ENCODE measurements at regions of chr9 and their contacts with region 1.

Region 1: GRCh38 chr9:68584189-68585033 is 43.7 kb upstream of the TMEM252 start:
- DNase-seq: peak; percentile 64 to 89 (median 80)
- ATAC-seq: peak; percentile 100
- H3K4me3 ChIP-seq: no peak overlapping the region
- H3K4me3 Mint-ChIP-seq: no peak overlapping the region
- H3K27ac ChIP-seq: no peak overlapping the region
- H3K27ac Mint-ChIP-seq: peak overlapping the region in 1 of 9 donors; percentile 63
- H3K4me1 ChIP-seq: no peaks in the 10 kb centered on the region
- H3K4me1 Mint-ChIP-seq: peaks cover 0 to 5% (median 0%) of the 10 kb centered on the region in 7 donors
- H3K27me3 ChIP-seq: no peaks in the 10 kb centered on the region
- H3K27me3 Mint-ChIP-seq: peaks cover 0 to 14% (median 10%) of the 10 kb centered on the region in 5 donors

Region 2: GRCh38 chr9:68704814-68705530 is 120.6 kb after region 1 on chr9 and contains the start of gene PIP5K1B:
- CTCF ChIA-PET with region 1: no interaction called
- POLR2A ChIA-PET with region 1: no interaction called
- intact Hi-C with region 1: loop called in 1 of 2 experiments (anchors 10 kb)
- DNase-seq: peak in 6 of 9 donors; percentile 2 to 77 (median 13)
- ATAC-seq: peak; percentile 87
- H3K4me3 ChIP-seq: no peak within 1 kb of the TSS
- H3K4me3 Mint-ChIP-seq: peak within 1 kb of the TSS; percentile 67 to 95 (median 80)
- H3K27ac ChIP-seq: no peak within 1 kb of the TSS
- H3K27ac Mint-ChIP-seq: peak within 1 kb of the TSS in 1 of 9 donors; percentile 70
- H3K4me1 ChIP-seq: peaks cover 0 to 6% of the 10 kb centered on the region in 2 donors
- H3K4me1 Mint-ChIP-seq: peaks cover 5 to 25% (median 20%) of the 10 kb centered on the region in 7 donors
- H3K27me3 ChIP-seq: peaks cover 3 to 14% of the 10 kb centered on the region in 2 donors
- H3K27me3 Mint-ChIP-seq: peaks cover 74 to 86% (median 77%) of the 10 kb centered on the region in 5 donors
- total RNA-seq, gene PIP5K1B: 0.22 to 4.2 (median 1.5) TPM

Region 3: GRCh38 chr9:68844631-68845612 is 260.5 kb after region 1 on chr9:
- CTCF ChIA-PET with region 1: no interaction called
- POLR2A ChIA-PET with region 1: no interaction called
- intact Hi-C with region 1: loop called (anchors 1 kb)
- DNase-seq: peak in 1 of 9 donors; percentile 15
- ATAC-seq: peak; percentile 57
- H3K4me3 ChIP-seq: no peak overlapping the region
- H3K4me3 Mint-ChIP-seq: peak overlapping the region in 3 of 10 donors; percentile 15 to 43 (median 17)
- H3K27ac ChIP-seq: no peak overlapping the region
- H3K27ac Mint-ChIP-seq: peak overlapping the region in 1 of 9 donors; percentile 23
- H3K4me1 ChIP-seq: no peaks in the 10 kb centered on the region
- H3K4me1 Mint-ChIP-seq: peaks cover 0 to 14% (median 5%) of the 10 kb centered on the region in 7 donors
- H3K27me3 ChIP-seq: no peaks in the 10 kb centered on the region
- H3K27me3 Mint-ChIP-seq: peaks cover 0 to 7% (median 0%) of the 10 kb centered on the region in 5 donors

Region 4: GRCh38 chr9:68949271-68950000 is 365.0 kb after region 1 on chr9:
- CTCF ChIA-PET with region 1: interaction called, 18 read pairs
- POLR2A ChIA-PET with region 1: no interaction called
- intact Hi-C with region 1: loop called (anchors 1 kb)
- DNase-seq: peak in 7 of 9 donors; percentile 15 to 32 (median 24)
- ATAC-seq: no peak
- H3K4me3 ChIP-seq: no peak overlapping the region
- H3K4me3 Mint-ChIP-seq: peak overlapping the region in 1 of 10 donors; percentile 21
- H3K27ac ChIP-seq: no peak overlapping the region
- H3K27ac Mint-ChIP-seq: peak overlapping the region in 2 of 9 donors; percentile 43 to 57
- H3K4me1 ChIP-seq: no peaks in the 10 kb centered on the region
- H3K4me1 Mint-ChIP-seq: peaks cover 0 to 36% (median 0%) of the 10 kb centered on the region in 7 donors
- H3K27me3 ChIP-seq: no peaks in the 10 kb centered on the region
- H3K27me3 Mint-ChIP-seq: peaks cover 0 to 16% (median 0%) of the 10 kb centered on the region in 5 donors